Activated CD4-positive, alpha-beta T cell treated with anti-CD3 and anti-CD28 coated beads, Interleukin-2, amount 10 ng/mL, durations not matched to agents 7 days and 5 days (primary cell): ENCODE measurements at regions of chr1 and their contacts with region 1.

Region 1: GRCh38 chr1:9110669-9111356 is 18.1 kb downstream of the GPR157 start:
- DNase-seq: peak; percentile 90
- H3K4me3 Mint-ChIP-seq: no peak overlapping the region
- H3K27ac Mint-ChIP-seq: no peak overlapping the region
- H3K4me1 Mint-ChIP-seq: peaks cover 31% of the 10 kb centered on the region
- H3K27me3 Mint-ChIP-seq: no peaks in the 10 kb centered on the region

Region 2: DNA sequence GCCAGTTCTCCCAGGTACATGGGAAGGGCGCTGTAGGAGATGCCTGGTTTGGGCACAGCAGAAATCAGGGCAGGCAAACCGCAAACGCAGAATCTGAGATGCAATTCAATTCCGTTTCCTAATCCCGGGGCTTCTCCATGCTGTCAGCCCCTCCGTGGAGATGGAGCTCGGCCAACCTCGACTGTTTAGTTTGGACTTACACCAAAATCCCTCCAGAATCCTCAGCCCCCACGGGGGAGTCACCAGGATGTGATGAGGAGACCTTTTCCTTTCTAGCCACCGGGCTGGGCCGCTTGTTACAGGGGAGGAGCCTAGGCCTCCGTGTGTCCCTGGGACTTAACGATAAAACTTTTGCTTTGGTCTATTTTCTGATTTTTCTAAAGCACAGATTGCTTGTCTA is 92.5 kb before region 1 on chr1:
- CTCF ChIA-PET with region 1: no interaction called
- POLR2A ChIA-PET with region 1: no interaction called
- DNase-seq: no peak
- H3K4me3 Mint-ChIP-seq: no peak overlapping the region
- H3K27ac Mint-ChIP-seq: no peak overlapping the region
- H3K4me1 Mint-ChIP-seq: peaks cover 10% of the 10 kb centered on the region
- H3K27me3 Mint-ChIP-seq: peaks cover 18% of the 10 kb centered on the region

Region 3: DNA sequence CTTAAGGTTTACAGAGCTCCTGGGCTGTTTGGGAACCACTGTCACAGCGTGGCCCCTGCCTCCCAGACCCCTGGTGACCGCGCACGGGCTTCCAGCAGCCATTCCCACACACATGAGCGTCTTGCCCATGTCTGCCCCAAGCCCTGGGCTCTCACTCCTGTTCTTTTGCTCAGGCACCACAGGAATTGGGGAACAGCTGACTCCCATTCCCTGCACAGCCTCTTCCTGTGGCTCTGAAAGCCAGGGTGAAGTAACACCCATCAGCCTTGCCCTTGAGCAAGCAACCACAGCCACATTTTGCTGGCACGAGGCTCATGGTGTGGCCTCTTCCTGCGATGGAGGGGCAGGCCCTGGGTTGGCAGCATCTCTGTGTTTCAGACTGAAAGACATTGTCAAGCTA is 32.4 kb after region 1 on chr1:
- CTCF ChIA-PET with region 1: interaction called, 11 read pairs
- POLR2A ChIA-PET with region 1: no interaction called
- DNase-seq: no peak
- H3K4me3 Mint-ChIP-seq: no peak overlapping the region
- H3K27ac Mint-ChIP-seq: no peak overlapping the region
- H3K4me1 Mint-ChIP-seq: peaks cover 15% of the 10 kb centered on the region
- H3K27me3 Mint-ChIP-seq: peaks cover 4% of the 10 kb centered on the region

Region 4: GRCh38 chr1:9196129-9197040 is 85.6 kb after region 1 on chr1:
- CTCF ChIA-PET with region 1: interaction called, 13 read pairs
- POLR2A ChIA-PET with region 1: no interaction called
- DNase-seq: peak; percentile 67
- H3K4me3 Mint-ChIP-seq: no peak overlapping the region
- H3K27ac Mint-ChIP-seq: no peak overlapping the region
- H3K4me1 Mint-ChIP-seq: peaks cover 18% of the 10 kb centered on the region
- H3K27me3 Mint-ChIP-seq: peaks cover 62% of the 10 kb centered on the region

Region 5: DNA sequence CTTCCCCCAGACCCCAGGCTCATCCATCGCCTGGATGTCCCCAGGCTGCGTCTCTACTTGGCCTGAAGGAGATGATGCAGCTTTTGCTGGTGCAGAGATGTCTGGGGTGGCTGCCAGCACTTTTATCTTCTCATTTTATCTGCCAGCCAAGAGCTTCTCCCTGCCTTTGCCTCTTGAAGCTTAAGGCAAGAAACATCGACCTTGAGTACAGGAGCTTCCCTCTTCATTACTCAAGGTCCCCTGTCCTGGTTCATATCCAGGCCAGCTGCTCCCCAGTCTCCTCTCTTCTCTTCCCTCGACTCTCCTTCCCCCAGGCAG is 114.6 kb after region 1 on chr1:
- CTCF ChIA-PET with region 1: no interaction called
- POLR2A ChIA-PET with region 1: no interaction called
- DNase-seq: no peak
- H3K4me3 Mint-ChIP-seq: no peak overlapping the region
- H3K27ac Mint-ChIP-seq: no peak overlapping the region
- H3K4me1 Mint-ChIP-seq: no peaks in the 10 kb centered on the region
- H3K27me3 Mint-ChIP-seq: peaks cover 6% of the 10 kb centered on the region